GM12878 (cell line): ENCODE measurements at regions of chr11 and their contacts with region 1.

Region 1: GRCh38 chr11:75445315-75445953 is 12.4 kb upstream of the KLHL35 start:
- DNase-seq: peak; percentile 19
- ATAC-seq: peak; percentile 91
- H3K4me3 ChIP-seq: no peak overlapping the region
- H3K27ac ChIP-seq: no peak overlapping the region
- H3K4me1 ChIP-seq: no peaks in the 10 kb centered on the region
- H3K27me3 ChIP-seq: no peaks in the 10 kb centered on the region
- CTCF ChIP-seq: peak; percentile 93 to 99 (median 97); a peak in 5 of 6 replicates
- EP300 ChIP-seq: no peak
- POLR2A ChIP-seq: no peak
- RAD21 ChIP-seq: peak; percentile 100

Region 2: GRCh38 chr11:74641289-74641688 is 804.1 kb before region 1 on chr11:
- CTCF ChIA-PET with region 1: no interaction called
- POLR2A ChIA-PET with region 1: no interaction called
- RAD21 ChIA-PET with region 1: no interaction called
- SMC1A ChIA-PET with region 1: no interaction called
- in situ Hi-C with region 1: no loop called
- intact Hi-C with region 1: no loop called
- DNase-seq: no peak
- ATAC-seq: no peak
- H3K4me3 ChIP-seq: no peak overlapping the region
- H3K27ac ChIP-seq: no peak overlapping the region
- H3K4me1 ChIP-seq: no peaks in the 10 kb centered on the region
- H3K27me3 ChIP-seq: no peaks in the 10 kb centered on the region
- CTCF ChIP-seq: no peak
- EP300 ChIP-seq: no peak
- POLR2A ChIP-seq: no peak
- RAD21 ChIP-seq: no peak

Region 3: DNA sequence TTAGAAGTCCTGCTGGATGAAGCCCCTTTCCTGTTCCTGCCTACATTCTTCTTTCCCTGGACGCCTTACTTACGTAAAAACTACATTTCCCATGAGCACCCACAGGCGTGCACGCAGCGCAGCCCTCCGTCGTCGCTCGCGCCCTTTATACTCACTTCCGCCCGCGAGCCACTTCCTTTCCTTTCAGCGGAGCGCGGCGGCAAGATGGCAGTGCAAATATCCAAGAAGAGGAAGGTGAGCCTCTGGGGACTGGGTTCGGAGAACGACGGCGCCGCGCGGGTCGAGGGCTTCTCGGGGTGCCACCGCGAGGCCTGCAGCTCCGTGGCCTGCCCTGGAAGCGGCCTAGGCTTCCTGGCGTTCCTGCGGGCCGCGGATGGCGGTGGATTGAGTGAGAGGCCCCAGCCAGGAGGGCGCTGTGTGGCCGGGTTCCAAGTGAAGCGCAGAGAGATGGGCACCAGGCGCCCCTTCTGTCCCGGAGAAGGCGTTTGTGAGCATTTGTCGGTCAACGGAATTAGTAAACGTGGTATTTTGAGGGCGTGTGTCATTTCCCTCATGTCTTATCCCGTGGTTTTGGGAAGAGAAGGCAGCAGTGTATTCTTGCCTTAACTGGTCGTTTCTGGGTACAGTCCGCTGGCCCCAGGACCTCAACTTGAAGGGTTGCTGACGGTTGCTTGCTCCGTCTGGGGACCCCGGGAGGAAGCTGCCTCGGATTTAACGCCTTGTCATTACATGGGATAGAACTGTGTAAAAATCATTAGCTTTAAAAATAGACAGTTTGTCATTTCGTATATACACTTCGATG is 45.9 kb before region 1 on chr11 and contains the start of gene RPS3:
- CTCF ChIA-PET with region 1: interaction called, 10 read pairs
- POLR2A ChIA-PET with region 1: no interaction called
- RAD21 ChIA-PET with region 1: interaction called, 3 read pairs
- SMC1A ChIA-PET with region 1: interaction called, 3 read pairs
- in situ Hi-C with region 1: no loop called
- intact Hi-C with region 1: no loop called
- DNase-seq: peak; percentile 72
- ATAC-seq: peak; percentile 90
- H3K4me3 ChIP-seq: peak within 1 kb of the TSS; percentile 88
- H3K27ac ChIP-seq: peak within 1 kb of the TSS; percentile 98
- H3K4me1 ChIP-seq: no peaks in the 10 kb centered on the region; the same call in 1 of the 2 replicates
- H3K27me3 ChIP-seq: peaks cover 0 to 3% of the 10 kb centered on the region in 2 experiments; a peak in 1 of 4 replicates
- CTCF ChIP-seq: peak in 2 of 3 experiments; percentile 17; a peak in 3 of 6 replicates
- EP300 ChIP-seq: peak in 1 of 2 experiments; percentile 54; a peak in 1 of 4 replicates
- POLR2A ChIP-seq: peak; percentile 100
- RAD21 ChIP-seq: no peak
- polyA plus RNA-seq, gene RPS3: 7,007 to 9,556 TPM

Region 4: DNA sequence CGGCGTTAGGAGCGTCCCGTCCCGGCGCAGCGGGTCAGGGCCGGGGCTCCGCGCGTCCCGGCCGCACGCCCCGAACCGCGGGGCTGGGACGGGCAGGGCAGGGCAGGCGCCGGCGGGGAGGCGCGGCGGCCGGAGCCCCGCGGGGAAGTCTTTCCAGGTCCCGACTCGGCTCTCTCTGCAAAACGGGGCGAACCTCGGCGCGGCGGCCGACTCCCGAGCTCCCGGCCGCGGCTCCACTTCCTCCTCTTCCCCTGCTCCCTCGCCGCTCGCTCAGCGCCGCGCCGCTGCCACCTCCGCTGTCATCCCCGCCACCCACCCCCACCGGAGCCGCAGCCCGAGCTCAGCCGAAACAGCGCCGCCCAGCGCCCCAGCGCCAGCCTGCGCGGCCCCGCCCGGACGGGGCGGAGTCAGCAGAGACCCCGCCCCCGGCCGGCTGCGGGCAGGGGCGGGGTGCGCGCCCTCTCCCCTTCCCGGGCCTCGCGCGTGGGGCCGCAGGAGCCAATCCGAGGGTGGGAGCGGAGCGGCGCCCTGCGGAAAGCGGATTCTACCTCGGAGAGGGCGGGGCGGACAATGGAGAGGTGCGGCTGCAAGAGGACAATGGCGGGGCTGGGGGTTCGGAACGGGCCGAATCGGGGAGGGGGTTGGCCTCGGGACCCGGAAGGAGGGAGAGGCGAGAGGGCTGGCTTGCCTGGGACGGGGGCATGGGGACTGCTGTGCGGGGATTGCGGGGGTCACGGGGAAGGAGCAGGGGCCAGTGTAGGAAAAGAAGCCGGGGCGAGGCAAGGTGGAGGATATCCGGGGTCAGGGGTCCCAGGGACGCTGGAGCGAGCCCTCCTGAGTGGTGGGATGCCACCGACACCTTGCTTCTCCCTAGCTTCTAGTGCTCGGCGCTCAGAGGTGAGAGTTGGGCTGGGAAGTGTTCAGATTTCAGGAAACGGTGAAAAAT is 80.4 kb after region 1 on chr11 and contains the start of gene GDPD5:
- CTCF ChIA-PET with region 1: interaction called, 288 read pairs
- POLR2A ChIA-PET with region 1: interaction called, 3 read pairs
- RAD21 ChIA-PET with region 1: interaction called, 53 read pairs
- SMC1A ChIA-PET with region 1: interaction called, 114 read pairs
- in situ Hi-C with region 1: loop called (anchors 5 kb)
- intact Hi-C with region 1: no loop called
- DNase-seq: no peak
- ATAC-seq: peak; percentile 84
- H3K4me3 ChIP-seq: peak within 1 kb of the TSS; percentile 80
- H3K27ac ChIP-seq: peak within 1 kb of the TSS; percentile 28; the same call in 1 of the 2 replicates
- H3K4me1 ChIP-seq: peaks cover 18% of the 10 kb centered on the region
- H3K27me3 ChIP-seq: 0 out of 4 replicates have a peak, but pooled peaks cover 0 to 3% of the 10 kb centered on the region in 2 experiments
- CTCF ChIP-seq: peak; percentile 55 to 71 (median 59); a peak in 5 of 6 replicates
- EP300 ChIP-seq: no peak
- POLR2A ChIP-seq: peak; percentile 78
- RAD21 ChIP-seq: peak; percentile 49
- polyA plus RNA-seq, gene GDPD5: 0.10 to 0.80 TPM

Region 5: GRCh38 chr11:75592715-75593114 is 147.3 kb after region 1 on chr11:
- CTCF ChIA-PET with region 1: no interaction called
- POLR2A ChIA-PET with region 1: no interaction called
- RAD21 ChIA-PET with region 1: no interaction called
- SMC1A ChIA-PET with region 1: no interaction called
- in situ Hi-C with region 1: no loop called
- intact Hi-C with region 1: no loop called
- DNase-seq: no peak
- ATAC-seq: no peak
- H3K4me3 ChIP-seq: no peak overlapping the region
- H3K27ac ChIP-seq: no peak overlapping the region
- H3K4me1 ChIP-seq: peaks cover 8% of the 10 kb centered on the region
- H3K27me3 ChIP-seq: no peaks in the 10 kb centered on the region; a peak in 2 of 4 replicates
- CTCF ChIP-seq: peak in 1 of 3 experiments; percentile 18; a peak in 1 of 6 replicates
- EP300 ChIP-seq: no peak
- POLR2A ChIP-seq: no peak
- RAD21 ChIP-seq: no peak